Activated naive CD8-positive, alpha-beta T cell treated with anti-CD3 and anti-CD28 coated beads, Interleukin-2, amount 10 ng/mL, durations not matched to agents 7 days and 5 days (primary cell): ENCODE measurements at regions of chr14 and their contacts with region 1.

Region 1: DNA sequence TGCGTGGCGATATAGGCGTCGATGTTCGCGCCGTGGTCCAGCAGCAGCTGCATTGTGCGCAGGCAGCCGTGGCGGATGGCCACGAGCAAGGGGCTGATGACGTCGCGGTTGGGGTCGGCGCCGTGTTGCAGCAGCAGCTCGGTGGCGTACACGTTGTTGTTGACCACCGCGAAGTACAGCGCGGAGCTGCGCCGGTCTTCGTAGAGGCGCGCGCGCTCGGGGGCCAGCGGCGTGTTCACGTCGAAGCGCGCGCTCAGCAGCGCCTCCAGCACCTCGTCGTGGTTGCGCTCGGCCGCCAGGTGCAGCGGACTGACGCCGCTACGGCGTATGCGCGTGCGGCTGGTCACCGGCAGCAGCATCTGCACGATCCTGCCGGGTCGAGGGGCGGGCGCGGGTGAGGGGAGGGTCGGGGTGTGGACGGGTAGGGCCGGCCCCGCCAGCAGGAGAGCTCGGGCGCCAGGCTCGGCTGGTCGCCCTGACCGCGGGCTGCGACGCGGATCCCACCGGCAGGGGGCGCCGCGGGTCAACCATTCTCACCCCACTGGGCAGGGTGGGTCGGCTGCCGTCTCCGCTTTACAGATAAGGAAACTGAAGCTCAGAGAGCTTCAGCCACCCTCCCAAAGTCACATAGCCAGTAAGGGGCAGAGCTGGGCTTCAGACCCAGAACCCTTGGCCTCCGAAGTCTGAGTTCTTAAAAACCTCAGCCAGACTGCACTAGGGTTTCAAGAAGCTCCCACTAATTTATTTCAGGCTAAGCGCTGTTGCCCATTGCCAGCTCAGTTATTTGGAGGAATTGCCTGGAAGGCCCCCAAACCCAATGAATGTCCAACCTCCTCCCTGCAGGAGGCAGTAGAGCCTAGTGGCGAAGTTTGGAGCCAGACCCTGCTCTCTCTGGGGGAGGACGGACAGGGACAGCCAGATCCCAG is 12.4 kb downstream of the FAM181A start:
- DNase-seq: peak; percentile 98
- ATAC-seq: peak; percentile 95
- H3K4me3 Mint-ChIP-seq: peak overlapping the region; percentile 64
- H3K27ac Mint-ChIP-seq: peak overlapping the region; percentile 75
- H3K4me1 Mint-ChIP-seq: peaks cover 8% of the 10 kb centered on the region
- H3K27me3 Mint-ChIP-seq: no peaks in the 10 kb centered on the region

Region 2: GRCh38 chr14:93959239-93960107 is 19.9 kb after region 1 on chr14:
- POLR2A ChIA-PET with region 1: interaction called, 12 read pairs
- DNase-seq: peak; percentile 84
- ATAC-seq: peak; percentile 78
- H3K4me3 Mint-ChIP-seq: peak overlapping the region; percentile 74
- H3K27ac Mint-ChIP-seq: peak overlapping the region; percentile 91
- H3K4me1 Mint-ChIP-seq: peaks cover 85% of the 10 kb centered on the region
- H3K27me3 Mint-ChIP-seq: no peaks in the 10 kb centered on the region

Region 3: GRCh38 chr14:93970549-93970946 is 31.0 kb after region 1 on chr14:
- POLR2A ChIA-PET with region 1: interaction called, 54 read pairs
- DNase-seq: peak; percentile 61
- ATAC-seq: peak; percentile 76
- H3K4me3 Mint-ChIP-seq: peak overlapping the region; percentile 93
- H3K27ac Mint-ChIP-seq: peak overlapping the region; percentile 99
- H3K4me1 Mint-ChIP-seq: peaks cover 53% of the 10 kb centered on the region
- H3K27me3 Mint-ChIP-seq: no peaks in the 10 kb centered on the region

Region 4: DNA sequence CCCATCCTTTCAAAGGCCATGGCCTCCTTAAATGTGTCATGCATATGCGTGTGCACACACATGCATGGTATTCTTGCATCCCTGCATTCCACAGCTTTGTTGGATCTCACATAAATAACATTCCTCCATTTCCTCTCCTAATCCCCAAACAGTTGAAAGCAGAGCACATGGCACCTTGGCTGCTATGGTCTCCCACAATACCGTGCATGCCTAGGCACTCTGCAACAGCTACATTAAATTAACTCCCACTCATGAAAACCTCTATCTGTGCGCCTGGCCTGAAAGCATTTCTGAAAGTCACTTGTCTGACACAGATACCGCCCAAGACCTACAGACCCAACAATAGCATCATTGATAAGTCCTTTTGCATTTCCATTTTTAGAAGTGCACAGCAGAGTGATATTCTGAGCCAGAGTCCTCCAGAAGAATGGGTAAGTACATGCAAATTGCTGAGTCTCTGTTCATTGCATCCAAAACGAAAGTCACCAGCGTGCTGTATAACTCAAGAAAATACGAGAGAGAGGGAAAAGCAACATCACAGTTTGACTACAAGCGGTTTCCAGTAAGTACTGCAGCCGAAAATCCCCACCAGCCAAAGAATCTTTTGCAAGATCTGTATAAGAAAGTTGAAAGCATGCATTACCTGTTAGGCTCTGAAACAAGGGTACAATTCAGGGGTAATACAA is 36.4 kb after region 1 on chr14:
- POLR2A ChIA-PET with region 1: interaction called, 54 read pairs
- DNase-seq: no peak
- ATAC-seq: no peak
- H3K4me3 Mint-ChIP-seq: peak overlapping the region; percentile 73
- H3K27ac Mint-ChIP-seq: peak overlapping the region; percentile 87
- H3K4me1 Mint-ChIP-seq: peaks cover 75% of the 10 kb centered on the region
- H3K27me3 Mint-ChIP-seq: no peaks in the 10 kb centered on the region

Region 5: GRCh38 chr14:94001501-94002396 is 62.2 kb after region 1 on chr14:
- POLR2A ChIA-PET with region 1: interaction called, 15 read pairs
- DNase-seq: peak; percentile 69
- ATAC-seq: peak; percentile 76
- H3K4me3 Mint-ChIP-seq: peak overlapping the region; percentile 47
- H3K27ac Mint-ChIP-seq: peak overlapping the region; percentile 47
- H3K4me1 Mint-ChIP-seq: peaks cover 28% of the 10 kb centered on the region
- H3K27me3 Mint-ChIP-seq: peaks cover 5% of the 10 kb centered on the region